ENCODE measurements at regions of chr17 and their contacts with region 1.

Region 1: DNA sequence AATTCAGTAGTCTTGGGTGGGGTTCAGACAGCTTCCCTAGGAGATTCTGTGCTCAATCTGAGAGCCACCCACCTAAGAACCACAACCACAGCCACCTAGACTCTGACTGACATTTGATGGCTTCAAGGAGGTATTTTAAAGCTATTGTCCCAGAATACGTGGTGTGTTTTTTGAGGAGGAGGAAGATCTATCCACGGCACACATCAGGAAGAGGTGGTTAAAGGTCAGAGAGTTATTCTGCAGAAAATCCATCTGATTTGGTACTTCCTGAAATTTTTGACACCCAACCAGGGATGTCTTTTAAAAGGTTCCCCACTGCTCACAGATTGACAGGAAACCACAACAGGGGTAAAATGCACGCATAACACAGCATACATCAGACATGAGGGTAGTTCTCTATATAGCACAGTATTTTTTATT is 25.1 kb downstream of the SMARCE1 start:
- DNase-seq: no peak
- ATAC-seq: no peak
- H3K4me3 ChIP-seq: no peak overlapping the region
- H3K27ac ChIP-seq: no peak overlapping the region
- H3K4me1 ChIP-seq: peaks cover 0 to 10% (median 6%) of the 10 kb centered on the region in 9 donors
- H3K27me3 ChIP-seq: peaks cover 0 to 21% (median under 1%) of the 10 kb centered on the region in 7 donors
- CTCF ChIP-seq: no peak

Region 2: DNA sequence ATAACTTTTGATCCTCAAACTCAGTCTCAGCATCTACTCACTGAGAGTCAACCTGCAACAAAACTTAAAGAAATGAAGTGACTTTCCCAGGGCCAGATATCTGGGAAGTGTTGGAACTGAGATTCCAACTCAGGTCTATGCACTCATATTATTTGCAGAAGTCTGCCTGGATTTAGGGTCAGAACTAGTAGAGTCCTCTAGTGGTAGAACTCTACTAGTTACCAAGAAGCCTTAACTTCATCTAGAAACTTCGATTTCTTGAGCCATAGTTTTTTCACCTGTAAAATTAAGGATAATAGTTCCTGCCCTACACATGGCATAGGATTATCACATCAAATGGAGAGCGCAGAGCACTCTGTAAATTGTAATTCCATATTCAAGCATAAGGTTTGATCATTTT is 104.4 kb after region 1 on chr17:
- intact Hi-C with region 1: loop called in 2 of 10 experiments (anchors 5 kb)
- DNase-seq: no peak
- ATAC-seq: no peak
- H3K4me3 ChIP-seq: no peak overlapping the region
- H3K27ac ChIP-seq: no peak overlapping the region
- H3K4me1 ChIP-seq: no peaks in the 10 kb centered on the region
- H3K27me3 ChIP-seq: peaks cover 0 to 49% (median 12%) of the 10 kb centered on the region in 7 donors
- CTCF ChIP-seq: peak in 5 of 9 donors; percentile 12 to 39 (median 25)

Region 3: GRCh38 chr17:40791787-40792436 is 169.4 kb after region 1 on chr17:
- intact Hi-C with region 1: loop called in 8 of 10 experiments (anchors 1 to 10 kb)
- DNase-seq: no peak
- ATAC-seq: peak in 1 of 8 donors; percentile 35
- H3K4me3 ChIP-seq: no peak overlapping the region
- H3K27ac ChIP-seq: no peak overlapping the region
- H3K4me1 ChIP-seq: peaks cover 0 to 6% (median 0%) of the 10 kb centered on the region in 9 donors
- H3K27me3 ChIP-seq: peaks cover 0 to 39% (median 12%) of the 10 kb centered on the region in 7 donors
- CTCF ChIP-seq: peak in 8 of 9 donors; percentile 25 to 68 (median 58)

Measured in heart right ventricle (tissue), 16 donors.